ENCODE measurements at regions of chr17 and their contacts with region 1.

Region 1: DNA sequence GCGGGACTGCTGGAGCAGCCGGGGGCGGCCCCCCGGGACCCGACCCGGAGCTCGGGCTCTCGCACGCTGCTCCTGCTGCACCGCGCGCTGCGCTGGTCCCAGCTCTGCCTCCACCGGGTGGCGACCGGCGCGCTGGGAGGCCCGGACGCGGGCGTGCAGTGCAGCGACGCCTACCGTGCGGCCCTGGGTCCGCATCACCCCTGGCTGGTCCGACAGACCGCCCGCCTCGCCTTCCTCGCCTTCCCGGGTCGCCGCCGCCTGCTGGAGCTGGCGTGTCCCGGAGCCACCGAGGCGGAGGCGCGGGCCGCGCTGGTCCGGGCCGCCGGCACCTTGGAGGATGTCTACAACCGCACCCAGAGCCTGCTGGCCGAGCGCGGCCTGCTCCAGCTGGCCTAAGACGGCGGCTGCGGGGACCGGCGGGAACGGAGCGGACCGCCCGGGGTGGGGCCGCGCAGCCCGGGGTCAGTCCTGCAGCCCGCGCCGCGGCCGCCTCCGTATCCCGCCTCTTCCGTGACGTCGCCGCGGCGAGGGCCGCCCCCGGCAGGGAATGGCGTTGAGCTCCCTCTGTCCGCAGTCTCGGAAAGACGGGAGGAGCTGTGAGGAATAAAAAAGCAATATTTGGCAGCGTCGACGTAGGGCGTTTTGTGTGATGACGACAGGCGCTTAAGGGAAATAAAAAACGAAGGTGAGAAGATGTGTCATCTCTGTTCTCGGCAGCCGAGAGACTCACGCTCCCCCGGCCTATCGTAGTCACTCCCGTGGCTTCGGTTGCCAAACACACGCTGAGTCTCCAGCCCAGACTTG is 1.3 kb downstream of the GLTPD2 start:
- DNase-seq: peak; percentile 82 to 94 (median 88)
- ATAC-seq: peak; percentile 88 to 92 (median 92)
- H3K4me3 ChIP-seq: peak overlapping the region; percentile 53 to 71 (median 58)
- H3K27ac ChIP-seq: peak overlapping the region; percentile 93 to 98 (median 98)
- H3K4me1 ChIP-seq: peaks cover 0 to 20% (median 4%) of the 10 kb centered on the region in 3 donors
- H3K27me3 ChIP-seq: no peaks in the 10 kb centered on the region
- CTCF ChIP-seq: peak; percentile 58 to 80 (median 74)

Region 2: GRCh38 chr17:4739122-4740024 is 50.7 kb before region 1 on chr17 and contains the starts of genes CXCL16 and ZMYND15:
- intact Hi-C with region 1: loop called in 1 of 3 experiments (anchors 10 kb)
- DNase-seq: peak in 5 of 6 donors; percentile 44 to 85 (median 71)
- ATAC-seq: peak; percentile 74 to 81 (median 79)
- H3K4me3 ChIP-seq: peak within 1 kb of the TSS; percentile 65 to 89 (median 80)
- H3K27ac ChIP-seq: peak within 1 kb of the TSS; percentile 50 to 77 (median 69)
- H3K4me1 ChIP-seq: peaks cover 0 to 6% (median 0%) of the 10 kb centered on the region in 3 donors
- H3K27me3 ChIP-seq: no peaks in the 10 kb centered on the region
- CTCF ChIP-seq: no peak
- total RNA-seq, gene CXCL16: 7.6 to 55.6 (median 10.0) TPM
- total RNA-seq, gene ZMYND15: 0.39 to 3.2 (median 0.69) TPM

Region 3: GRCh38 chr17:4858882-4859260 is 68.8 kb after region 1 on chr17:
- intact Hi-C with region 1: no loop called
- DNase-seq: peak; percentile 51 to 73 (median 62)
- ATAC-seq: peak; percentile 70 to 93 (median 86)
- H3K4me3 ChIP-seq: no peak overlapping the region
- H3K27ac ChIP-seq: peak overlapping the region in 2 of 4 donors; percentile 62 to 63
- H3K4me1 ChIP-seq: peaks cover 0 to 16% (median 4%) of the 10 kb centered on the region in 3 donors
- H3K27me3 ChIP-seq: no peaks in the 10 kb centered on the region
- CTCF ChIP-seq: no peak

Region 4: GRCh38 chr17:4881761-4882555 is 91.9 kb after region 1 on chr17:
- intact Hi-C with region 1: loop called in 2 of 3 experiments (anchors 5 kb)
- DNase-seq: peak; percentile 56 to 89 (median 74)
- ATAC-seq: peak; percentile 91 to 97 (median 94)
- H3K4me3 ChIP-seq: no peak overlapping the region
- H3K27ac ChIP-seq: no peak overlapping the region
- H3K4me1 ChIP-seq: no peaks in the 10 kb centered on the region
- H3K27me3 ChIP-seq: no peaks in the 10 kb centered on the region
- CTCF ChIP-seq: peak; percentile 58 to 79 (median 73)